PC-9 (cell line): ENCODE measurements at regions of chr7 and their contacts with region 1.

Region 1: GRCh38 chr7:137626469-137627067 is 220.2 kb downstream of the DGKI start:
- DNase-seq: peak in 1 of 2 experiments; percentile 48
- H3K4me3 ChIP-seq: no peak overlapping the region
- H3K27ac ChIP-seq: no peak overlapping the region
- H3K4me1 ChIP-seq: no peaks in the 10 kb centered on the region
- H3K27me3 ChIP-seq: peaks cover 29% of the 10 kb centered on the region; the same call in 1 of the 2 replicates
- CTCF ChIP-seq: peak; percentile 76

Region 2: DNA sequence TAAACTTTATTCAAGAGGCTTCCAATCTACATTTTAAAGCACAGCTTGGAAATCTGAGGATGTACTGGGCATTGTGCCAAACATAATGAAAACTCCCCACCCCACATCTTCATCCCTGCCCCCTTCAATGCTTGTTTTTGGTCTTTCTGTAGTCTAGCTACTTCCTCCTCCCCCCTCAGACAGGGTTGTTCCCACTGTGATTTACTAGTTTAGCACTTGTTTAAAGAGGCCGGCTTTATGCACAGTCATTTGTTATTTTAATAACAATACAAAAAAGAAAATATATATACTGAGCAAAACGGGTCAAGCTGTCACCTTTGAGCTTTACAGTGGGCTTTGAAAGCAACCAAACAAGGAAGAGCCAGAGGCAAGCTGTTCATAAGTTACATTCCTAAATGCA is 625.5 kb before region 1 on chr7:
- CTCF ChIA-PET with region 1: interaction called, 10 read pairs
- POLR2A ChIA-PET with region 1: no interaction called
- intact Hi-C with region 1: no loop called
- DNase-seq: no peak
- H3K4me3 ChIP-seq: no peak overlapping the region
- H3K27ac ChIP-seq: no peak overlapping the region
- H3K4me1 ChIP-seq: peaks cover 11% of the 10 kb centered on the region; the same call in 1 of the 2 replicates
- H3K27me3 ChIP-seq: no peaks in the 10 kb centered on the region
- CTCF ChIP-seq: no peak

Region 3: GRCh38 chr7:137670199-137671071 is 43.9 kb after region 1 on chr7:
- CTCF ChIA-PET with region 1: no interaction called
- POLR2A ChIA-PET with region 1: no interaction called
- intact Hi-C with region 1: no loop called
- DNase-seq: no peak
- H3K4me3 ChIP-seq: no peak overlapping the region
- H3K27ac ChIP-seq: no peak overlapping the region
- H3K4me1 ChIP-seq: peaks cover 14% of the 10 kb centered on the region; the same call in 1 of the 2 replicates
- H3K27me3 ChIP-seq: peaks cover 69% of the 10 kb centered on the region
- CTCF ChIP-seq: no peak

Region 4: DNA sequence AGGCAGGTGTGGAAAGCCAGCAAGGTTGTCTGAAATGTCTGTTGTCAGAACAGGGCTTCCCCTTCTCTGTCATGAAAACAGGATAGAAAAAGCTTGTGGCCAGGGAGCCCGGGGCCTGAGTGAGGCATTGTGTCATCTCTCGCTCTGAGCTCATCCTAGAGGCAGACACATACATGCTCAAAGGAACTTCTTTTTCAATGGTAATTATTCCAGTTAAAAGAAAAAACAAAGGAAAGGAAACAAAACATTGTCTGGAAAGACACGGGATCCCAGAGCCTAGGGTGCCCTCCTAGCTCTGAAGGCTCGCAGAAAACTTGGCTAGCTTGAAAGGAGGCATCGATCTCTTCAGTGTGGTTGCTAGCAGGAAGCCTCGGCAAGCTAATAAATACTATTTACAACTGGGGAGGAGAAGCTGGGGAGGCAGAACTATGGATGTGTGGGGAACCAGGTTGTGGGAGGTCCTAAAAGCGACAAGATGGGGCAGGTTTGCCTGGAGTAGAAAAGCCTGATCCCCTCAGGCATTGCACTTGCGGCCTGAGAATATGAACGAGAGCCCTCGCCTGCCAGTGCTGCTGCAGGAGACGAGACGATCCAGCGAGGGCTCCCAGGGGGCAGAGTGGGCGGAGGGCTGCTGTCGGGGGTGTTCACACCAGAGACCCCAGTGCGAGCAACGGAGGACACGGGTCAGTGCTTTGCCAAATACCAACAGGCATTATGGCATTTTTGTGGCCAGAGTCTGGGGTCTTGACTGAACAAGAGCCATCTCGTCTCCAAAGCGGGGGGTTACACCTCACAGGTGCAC is 253.0 kb after region 1 on chr7:
- CTCF ChIA-PET with region 1: no interaction called
- POLR2A ChIA-PET with region 1: interaction called, 16 read pairs
- intact Hi-C with region 1: no loop called
- DNase-seq: no peak
- H3K4me3 ChIP-seq: no peak overlapping the region
- H3K27ac ChIP-seq: no peak overlapping the region
- H3K4me1 ChIP-seq: peaks cover 25% of the 10 kb centered on the region
- H3K27me3 ChIP-seq: no peaks in the 10 kb centered on the region
- CTCF ChIP-seq: no peak